Aorta (tissue), 5 donors: ENCODE measurements at regions of chr11 and their contacts with region 1.

Region 1: DNA sequence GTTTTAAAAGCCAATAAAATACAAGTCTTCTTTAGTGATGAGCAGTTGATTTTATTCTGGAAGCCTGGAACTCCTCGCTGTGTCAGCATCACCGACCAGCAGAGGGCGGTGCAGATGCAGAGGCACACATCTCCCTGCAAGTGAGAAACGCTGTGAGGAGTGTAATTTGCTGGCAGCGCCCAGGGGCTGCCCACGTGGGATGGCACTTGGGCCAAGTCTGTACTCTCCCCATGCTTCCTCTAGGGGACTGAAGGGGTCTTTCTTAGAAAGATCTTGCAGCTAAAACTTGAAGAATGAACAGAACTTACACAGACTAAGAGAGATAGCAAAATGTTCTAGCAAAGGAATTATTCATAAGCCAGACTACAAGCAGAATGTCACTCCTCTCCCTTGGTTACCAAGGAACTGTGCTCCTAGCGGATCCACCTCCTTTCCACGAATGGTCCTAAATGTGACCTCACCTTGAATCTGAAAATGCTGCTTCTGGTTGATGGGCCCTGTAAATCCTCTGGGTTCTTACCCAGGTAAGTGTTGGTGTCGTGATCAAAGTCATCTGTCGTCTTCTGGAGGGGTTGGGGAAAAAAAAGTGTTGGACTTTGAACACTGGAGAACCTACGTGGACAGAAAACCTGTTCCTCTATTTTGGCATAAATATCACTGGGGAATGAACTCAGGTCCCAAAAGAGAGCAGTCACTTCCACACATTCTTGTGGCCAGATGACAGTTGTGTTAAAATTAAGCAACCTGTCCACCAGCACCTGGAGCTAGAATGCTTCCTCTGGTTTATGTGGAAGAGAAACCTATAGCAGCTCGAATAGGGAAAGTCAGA is 31.8 kb downstream of the CNTF start:
- DNase-seq: peak; percentile 85 to 92
- ATAC-seq: peak; percentile 84
- H3K4me3 ChIP-seq: no peak overlapping the region
- H3K27ac ChIP-seq: no peak overlapping the region
- H3K4me1 ChIP-seq: no peaks in the 10 kb centered on the region
- H3K27me3 ChIP-seq: no peaks in the 10 kb centered on the region

Region 2: DNA sequence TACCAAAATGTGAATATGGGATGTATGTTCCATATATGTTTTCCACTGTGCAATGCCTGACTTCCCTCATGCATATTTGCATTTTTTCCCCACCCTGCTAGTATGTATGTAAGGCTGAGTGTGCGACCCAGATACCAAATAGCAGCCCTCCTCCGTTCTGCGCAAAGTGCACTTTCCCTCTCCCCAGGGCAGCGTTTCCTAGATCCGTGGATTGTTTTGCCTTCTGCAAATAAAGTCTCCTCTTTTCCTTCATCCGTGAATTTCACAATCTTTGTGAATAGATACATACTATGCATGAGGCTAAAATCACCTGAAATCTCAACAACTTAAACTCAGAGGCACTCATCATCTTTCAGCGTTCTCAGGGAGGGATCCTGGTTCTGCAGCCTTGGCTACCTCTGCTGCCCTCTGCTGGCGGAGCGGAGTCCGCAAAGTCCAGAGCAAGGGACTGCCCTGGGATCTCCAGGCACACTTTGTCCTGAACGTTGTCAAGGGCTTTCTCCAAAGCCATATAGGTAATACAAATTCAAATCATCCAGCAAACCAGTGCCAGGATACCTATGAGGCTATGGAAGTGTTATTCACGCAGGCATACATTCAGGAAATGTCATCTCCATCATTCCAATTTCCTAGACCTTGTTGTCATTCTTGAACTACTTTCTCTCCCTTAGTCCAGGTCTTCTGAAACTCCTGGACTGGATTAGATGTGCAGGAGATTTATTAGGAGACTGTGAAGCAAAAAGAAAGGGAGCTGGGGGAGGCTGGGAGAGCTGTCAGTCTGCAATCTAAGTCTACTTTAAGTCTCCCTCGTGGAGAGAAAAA is 21.3 kb after region 1 on chr11:
- intact Hi-C with region 1: loop called in 1 of 2 experiments (anchors 2 kb)
- DNase-seq: peak; percentile 78 to 93
- ATAC-seq: peak; percentile 91
- H3K4me3 ChIP-seq: no peak overlapping the region
- H3K27ac ChIP-seq: no peak overlapping the region
- H3K4me1 ChIP-seq: no peaks in the 10 kb centered on the region
- H3K27me3 ChIP-seq: no peaks in the 10 kb centered on the region

Region 3: GRCh38 chr11:59158206-59159068 is 504.1 kb after region 1 on chr11:
- intact Hi-C with region 1: loop called (anchors 5 to 10 kb)
- DNase-seq: peak in 1 of 2 donors; percentile 53
- ATAC-seq: peak; percentile 89
- H3K4me3 ChIP-seq: no peak overlapping the region
- H3K27ac ChIP-seq: no peak overlapping the region
- H3K4me1 ChIP-seq: no peaks in the 10 kb centered on the region
- H3K27me3 ChIP-seq: no peaks in the 10 kb centered on the region